ENCODE measurements at regions of chr2 and their contacts with region 1.

Region 1: DNA sequence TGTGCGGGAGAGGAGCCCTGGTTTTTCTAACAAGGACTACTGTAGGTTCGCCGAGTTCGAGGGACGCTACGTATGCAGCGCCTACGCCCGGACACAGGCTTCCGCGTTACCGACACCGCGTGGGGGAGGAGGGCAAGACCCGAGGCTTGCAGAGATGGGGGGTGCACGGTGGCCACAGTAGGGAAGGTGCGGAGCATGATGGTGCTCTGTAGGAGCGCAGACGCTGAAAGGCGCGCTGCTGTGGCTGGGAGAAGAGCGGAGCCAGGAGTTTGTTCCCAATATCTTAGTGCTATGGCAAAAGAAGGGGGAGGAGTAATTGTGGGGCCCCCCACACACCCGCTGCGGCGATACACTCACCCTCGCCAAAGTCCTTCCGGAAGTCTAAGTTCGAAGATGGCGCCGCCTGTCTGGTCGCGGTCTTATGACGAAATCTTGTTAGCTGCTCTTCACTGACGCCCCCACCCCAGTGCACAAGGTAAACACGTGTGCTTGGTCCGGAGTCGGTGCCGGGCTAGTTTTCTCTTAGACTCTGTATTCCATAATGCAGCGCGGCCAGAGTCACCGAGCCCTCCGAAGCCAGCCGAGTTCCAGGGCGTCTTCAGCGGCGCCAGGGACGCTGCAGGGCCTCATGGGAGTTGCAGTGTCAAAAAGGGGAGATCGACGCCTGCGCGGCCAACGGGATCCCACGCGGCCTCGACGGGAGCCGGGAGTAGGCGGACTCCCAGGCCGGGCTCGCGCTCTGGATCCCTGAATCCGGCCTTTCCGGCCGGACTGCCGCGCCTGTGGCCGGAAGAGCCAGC is at the start of gene GTF3C2:
- DNase-seq: peak; percentile 97
- H3K4me3 ChIP-seq: peak within 1 kb of the TSS; percentile 52 to 94 (median 84)
- H3K27ac ChIP-seq: peak within 1 kb of the TSS; percentile 79 to 93 (median 86)
- H3K4me1 ChIP-seq: peaks cover 0 to 38% (median 34%) of the 10 kb centered on the region in 4 donors
- H3K27me3 ChIP-seq: no peaks in the 10 kb centered on the region
- CTCF ChIP-seq: no peak
- EP300 ChIP-seq: peak in 1 of 4 donors; percentile 6
- POLR2A ChIP-seq: peak in 1 of 2 donors; percentile 33
- total RNA-seq, gene GTF3C2: 23.3 to 46.5 (median 28.9) TPM

Region 2: DNA sequence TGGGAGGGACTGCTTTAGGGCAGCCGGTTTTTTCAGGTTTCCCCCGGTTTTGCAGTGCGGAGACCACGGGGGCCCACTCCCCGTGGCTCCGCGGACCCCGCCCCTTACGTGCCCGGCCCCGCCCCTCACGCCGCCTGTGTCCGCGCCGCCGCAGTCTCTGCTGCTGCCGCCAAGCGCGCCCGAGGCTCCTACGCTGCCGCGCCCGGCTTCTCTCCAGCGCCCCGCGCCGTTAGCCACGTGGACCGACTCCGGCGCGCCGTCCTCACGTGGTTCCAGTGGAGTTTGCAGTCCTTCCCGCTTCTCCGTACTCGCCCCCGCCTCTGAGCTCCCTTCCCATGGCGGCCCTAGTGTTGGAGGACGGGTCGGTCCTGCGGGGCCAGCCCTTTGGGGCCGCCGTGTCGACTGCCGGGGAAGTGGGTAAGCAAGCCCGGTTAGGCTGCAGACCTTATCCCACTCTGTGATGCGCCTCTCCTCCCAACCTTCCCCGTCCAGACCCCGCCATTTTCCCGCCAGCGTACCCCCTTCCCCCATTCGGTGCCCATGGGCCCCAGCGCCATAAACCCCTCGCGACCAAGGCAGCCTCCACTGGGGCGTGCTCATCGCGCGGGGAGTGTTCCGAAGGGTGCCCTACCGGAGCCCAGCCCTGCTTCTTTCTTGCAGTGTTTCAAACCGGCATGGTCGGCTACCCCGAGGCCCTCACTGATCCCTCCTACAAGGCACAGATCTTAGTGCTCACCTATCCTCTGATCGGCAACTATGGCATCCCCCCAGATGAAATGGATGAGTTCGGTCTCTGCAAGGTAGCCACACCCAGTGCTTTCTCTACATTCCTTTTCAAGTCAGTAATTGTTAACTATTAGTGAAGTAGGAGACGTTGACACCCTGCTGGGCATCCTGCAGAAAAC is 139.1 kb before region 1 on chr2 and contains the start of gene CAD:
- intact Hi-C with region 1: loop called (anchors 10 kb)
- DNase-seq: peak; percentile 93
- H3K4me3 ChIP-seq: peak within 1 kb of the TSS; percentile 47 to 71 (median 66)
- H3K27ac ChIP-seq: peak within 1 kb of the TSS; percentile 74 to 79 (median 77)
- H3K4me1 ChIP-seq: peaks cover 0 to 36% (median 26%) of the 10 kb centered on the region in 4 donors
- H3K27me3 ChIP-seq: no peaks in the 10 kb centered on the region
- CTCF ChIP-seq: peak in 3 of 4 experiments; percentile 9 to 30 (median 25)
- EP300 ChIP-seq: no peak
- POLR2A ChIP-seq: no peak
- total RNA-seq, gene CAD: 9.1 to 25.2 (median 17.1) TPM

Region 3: GRCh38 chr2:27428213-27428977 is 71.8 kb after region 1 on chr2 and contains the start of gene NRBP1:
- intact Hi-C with region 1: loop called (anchors 1 kb)
- DNase-seq: peak; percentile 95
- H3K4me3 ChIP-seq: peak within 1 kb of the TSS; percentile 89 to 99 (median 96)
- H3K27ac ChIP-seq: peak within 1 kb of the TSS; percentile 97 to 100 (median 98)
- H3K4me1 ChIP-seq: peaks cover 0 to 48% (median 40%) of the 10 kb centered on the region in 4 donors
- H3K27me3 ChIP-seq: no peaks in the 10 kb centered on the region
- CTCF ChIP-seq: no peak
- EP300 ChIP-seq: no peak
- POLR2A ChIP-seq: peak; percentile 92 to 93
- total RNA-seq, gene NRBP1: 78.5 to 93.5 (median 86.4) TPM

Measured in sigmoid colon (tissue), 7 donors.